Activated T-helper 1 cell treated with anti-CD3 and anti-CD28 coated beads, Interleukin-12 subunit alpha, Interleukin-12 subunit beta, Interleukin-2, Interleukin-4 antibody, amounts not matched to agents 30 ng/mL and 10 ng/mL and 1 ng/mL, durations not matched to agents 14 hours and 24 hours and 36 hours (primary cell): ENCODE measurements at regions of chr19 and their contacts with region 1.

Region 1: DNA sequence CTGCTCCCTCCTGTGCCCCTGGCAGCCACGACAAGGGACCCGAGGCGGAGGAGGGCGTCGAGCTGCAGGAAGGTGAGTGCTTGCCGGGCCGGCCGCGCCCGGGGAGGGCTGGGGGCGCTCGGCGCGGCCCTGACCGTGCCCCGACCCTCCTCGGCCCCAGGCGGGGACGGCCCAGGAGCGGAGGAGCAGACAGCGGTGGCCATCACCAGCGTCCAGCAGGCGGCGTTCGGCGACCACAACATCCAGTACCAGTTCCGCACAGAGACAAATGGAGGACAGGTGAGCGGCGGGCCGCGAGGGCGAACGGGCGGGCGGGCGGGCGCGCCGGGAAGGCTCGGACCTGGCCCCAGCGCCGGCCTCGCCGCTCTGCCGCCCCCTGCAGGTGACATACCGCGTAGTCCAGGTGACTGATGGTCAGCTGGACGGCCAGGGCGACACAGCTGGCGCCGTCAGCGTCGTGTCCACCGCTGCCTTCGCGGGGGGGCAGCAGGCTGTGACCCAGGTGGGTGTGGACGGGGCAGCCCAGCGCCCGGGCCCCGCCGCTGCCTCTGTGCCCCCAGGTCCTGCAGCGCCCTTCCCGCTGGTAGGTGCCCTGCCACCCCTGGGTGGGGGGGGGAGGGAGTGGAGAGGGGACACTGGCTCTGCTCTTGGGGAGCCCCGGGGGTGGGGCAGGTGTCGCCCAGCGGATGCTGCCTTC is 807 bp downstream of the USF2 start:
- DNase-seq: peak; percentile 71
- H3K4me3 Mint-ChIP-seq: peak overlapping the region; percentile 77
- H3K27ac Mint-ChIP-seq: peak overlapping the region; percentile 34
- H3K4me1 Mint-ChIP-seq: peaks cover 17% of the 10 kb centered on the region
- H3K27me3 Mint-ChIP-seq: no peaks in the 10 kb centered on the region

Region 2: GRCh38 chr19:35090506-35091237 is 178.9 kb before region 1 on chr19:
- intact Hi-C with region 1: no loop called
- DNase-seq: no peak
- H3K4me3 Mint-ChIP-seq: no peak overlapping the region
- H3K27ac Mint-ChIP-seq: no peak overlapping the region
- H3K4me1 Mint-ChIP-seq: no peaks in the 10 kb centered on the region
- H3K27me3 Mint-ChIP-seq: peaks cover 3% of the 10 kb centered on the region

Region 3: GRCh38 chr19:35140962-35141637 is 128.5 kb before region 1 on chr19:
- intact Hi-C with region 1: loop called (anchors 1 kb)
- DNase-seq: peak; percentile 90
- H3K4me3 Mint-ChIP-seq: peak overlapping the region; percentile 82
- H3K27ac Mint-ChIP-seq: peak overlapping the region; percentile 79
- H3K4me1 Mint-ChIP-seq: peaks cover 25% of the 10 kb centered on the region
- H3K27me3 Mint-ChIP-seq: peaks cover 14% of the 10 kb centered on the region

Region 4: DNA sequence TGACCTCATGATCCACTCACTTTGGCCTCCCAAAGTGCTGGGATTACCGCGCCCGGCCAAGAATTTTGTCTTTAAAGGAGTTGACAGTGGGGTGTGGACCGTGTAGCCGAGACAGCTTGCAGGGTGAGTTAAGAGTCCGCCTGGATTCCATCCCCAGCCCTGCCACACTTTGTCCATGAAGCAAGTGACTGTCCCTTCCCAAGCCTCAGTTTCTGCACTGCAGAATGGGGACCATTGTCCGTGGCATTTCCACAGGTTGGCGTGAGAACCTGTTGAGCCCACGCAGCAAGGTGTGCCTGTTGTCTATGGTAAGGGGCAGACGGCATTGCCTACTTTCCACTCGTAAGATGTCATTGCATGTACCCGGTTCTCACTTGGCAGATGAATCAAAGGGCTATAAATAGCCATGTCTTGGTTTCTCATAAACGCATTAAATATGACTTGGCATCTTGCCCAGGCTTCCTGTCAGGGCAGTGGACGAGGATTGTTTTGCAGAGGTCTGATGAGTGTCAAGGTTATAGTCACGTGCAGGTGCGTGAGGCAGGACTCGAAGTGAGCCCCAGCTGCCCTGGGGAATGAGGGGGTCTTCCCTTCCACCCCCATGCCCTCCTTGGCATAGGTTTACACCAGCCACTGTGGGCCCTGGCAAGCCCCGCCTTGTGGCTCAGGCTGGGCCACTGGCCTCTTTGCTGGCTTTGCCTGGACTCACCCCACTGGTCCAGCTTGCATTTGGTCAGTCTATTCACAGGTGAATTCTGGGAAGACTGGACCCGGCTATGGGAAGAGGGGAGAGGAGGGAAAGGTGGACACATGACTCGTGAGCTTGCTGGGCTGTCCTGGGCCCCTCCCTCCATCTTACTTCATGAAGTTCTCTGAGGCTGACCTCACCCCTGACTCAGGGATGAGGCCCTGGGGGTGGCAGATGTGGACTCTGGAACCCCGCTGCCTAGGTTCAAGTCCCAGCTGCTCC is 55.6 kb before region 1 on chr19:
- intact Hi-C with region 1: loop called (anchors 5 kb)
- DNase-seq: peak; percentile 42
- H3K4me3 Mint-ChIP-seq: peak overlapping the region; percentile 2
- H3K27ac Mint-ChIP-seq: peak overlapping the region; percentile 75
- H3K4me1 Mint-ChIP-seq: peaks cover 57% of the 10 kb centered on the region
- H3K27me3 Mint-ChIP-seq: no peaks in the 10 kb centered on the region

Region 5: DNA sequence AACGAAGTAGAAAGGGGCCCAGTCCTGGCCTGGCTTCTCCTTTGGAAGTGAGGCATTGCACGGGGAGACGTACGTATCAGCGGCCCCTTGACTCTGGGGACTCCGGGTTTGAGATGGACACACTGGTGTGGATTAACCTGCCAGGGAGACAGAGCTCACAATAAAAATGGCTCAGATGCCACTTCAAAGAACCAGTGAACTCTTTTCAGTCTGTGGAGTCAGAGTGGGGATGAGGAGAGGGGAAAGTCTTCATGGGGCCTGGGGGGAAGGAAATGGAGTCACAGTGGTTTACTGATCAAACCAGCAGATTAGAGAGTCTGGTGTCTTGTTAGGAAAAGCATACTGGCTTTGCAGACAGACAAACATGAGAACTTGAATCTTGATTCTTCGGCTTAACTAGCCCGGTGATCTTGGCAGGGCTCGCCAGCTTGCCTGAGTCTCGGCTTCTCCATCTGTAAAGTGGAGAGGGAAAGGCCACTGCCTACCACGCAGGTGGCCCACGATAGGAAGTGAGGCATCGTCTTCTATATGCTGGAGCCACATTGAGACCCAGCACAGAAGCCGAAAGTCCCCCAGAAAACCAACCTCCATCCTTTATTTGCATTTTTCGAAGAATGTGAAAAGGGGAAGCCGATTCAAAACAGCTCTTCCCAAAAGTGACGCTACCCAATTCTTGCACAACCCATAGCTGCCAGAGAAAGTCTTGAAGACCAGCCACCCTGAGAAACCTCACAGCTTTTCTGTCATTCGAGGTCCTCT is 77.8 kb after region 1 on chr19 and contains the start of gene FFAR1:
- intact Hi-C with region 1: loop called (anchors 1 kb)
- DNase-seq: peak; percentile 42
- H3K4me3 Mint-ChIP-seq: peak within 1 kb of the TSS; percentile 74
- H3K27ac Mint-ChIP-seq: peak within 1 kb of the TSS; percentile 99
- H3K4me1 Mint-ChIP-seq: peaks cover 37% of the 10 kb centered on the region
- H3K27me3 Mint-ChIP-seq: peaks cover 4% of the 10 kb centered on the region
- total RNA-seq, gene FFAR1: 0.12 and 0.18 TPM in 2 replicates

Region 6: GRCh38 chr19:35495107-35496064 is 225.8 kb after region 1 on chr19:
- intact Hi-C with region 1: loop called (anchors 1 kb)
- DNase-seq: peak; percentile 47
- H3K4me3 Mint-ChIP-seq: no peak overlapping the region
- H3K27ac Mint-ChIP-seq: no peak overlapping the region
- H3K4me1 Mint-ChIP-seq: peaks cover 11% of the 10 kb centered on the region
- H3K27me3 Mint-ChIP-seq: peaks cover 11% of the 10 kb centered on the region

Region 7: GRCh38 chr19:35628565-35629331 is 359.2 kb after region 1 on chr19 and contains the start of gene RBM42:
- intact Hi-C with region 1: loop called (anchors 1 kb)
- DNase-seq: peak; percentile 96
- H3K4me3 Mint-ChIP-seq: peak within 1 kb of the TSS; percentile 100
- H3K27ac Mint-ChIP-seq: peak within 1 kb of the TSS; percentile 100
- H3K4me1 Mint-ChIP-seq: peaks cover 12% of the 10 kb centered on the region
- H3K27me3 Mint-ChIP-seq: no peaks in the 10 kb centered on the region
- total RNA-seq, gene RBM42: 105 and 118 TPM in 2 replicates

Region 8: DNA sequence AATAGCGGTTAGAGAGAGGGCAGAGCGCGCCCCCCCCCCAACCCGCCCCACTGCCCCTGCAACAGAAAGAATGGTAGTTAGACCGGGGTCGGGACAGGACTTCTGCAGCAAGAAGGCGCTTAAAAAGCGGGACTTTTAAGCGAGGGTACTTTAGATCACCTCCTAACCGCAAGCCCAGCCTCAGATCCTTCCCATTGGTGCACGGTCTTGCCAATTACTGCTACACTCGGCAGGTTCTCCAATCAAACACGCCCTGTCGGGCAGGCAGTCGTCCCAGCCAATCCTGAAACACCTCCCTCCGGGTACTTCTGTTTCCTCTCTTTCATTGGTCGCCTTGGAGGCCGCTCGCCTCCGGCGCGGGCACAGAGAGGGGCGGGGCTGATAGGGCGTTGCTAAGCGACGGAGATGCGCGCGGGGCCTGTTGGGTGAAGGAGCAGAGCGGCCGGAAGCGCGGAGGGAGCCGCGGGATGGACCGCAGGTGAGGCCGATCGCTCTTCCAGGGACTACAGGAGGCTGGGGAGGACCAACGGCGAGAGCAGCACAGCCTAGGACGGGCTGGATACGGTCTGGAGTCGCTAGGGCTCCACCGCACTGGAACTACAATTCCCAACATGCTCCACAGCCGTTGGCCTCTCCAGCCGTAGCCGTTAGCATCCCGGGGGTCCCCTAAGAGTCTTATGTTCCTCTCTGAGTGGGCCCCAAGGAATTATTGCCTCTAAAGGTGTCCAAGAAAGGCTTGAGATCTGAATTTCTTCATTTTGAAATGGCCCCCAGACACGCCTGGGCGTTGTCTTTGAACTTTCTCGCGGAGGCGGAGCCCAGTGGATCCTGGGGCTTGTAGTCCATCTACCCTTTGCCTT is 488.4 kb after region 1 on chr19 and contains the start of gene PROSER3:
- intact Hi-C with region 1: no loop called
- DNase-seq: peak; percentile 99
- H3K4me3 Mint-ChIP-seq: peak within 1 kb of the TSS; percentile 89
- H3K27ac Mint-ChIP-seq: peak within 1 kb of the TSS; percentile 90
- H3K4me1 Mint-ChIP-seq: peaks cover 29% of the 10 kb centered on the region
- H3K27me3 Mint-ChIP-seq: no peaks in the 10 kb centered on the region
- total RNA-seq, gene PROSER3: 39.5 and 45.1 TPM in 2 replicates